Heart left ventricle (tissue), 16 donors: ENCODE measurements at regions of chr2 and their contacts with region 1.

Region 1: GRCh38 chr2:36711741-36712288 is 15.3 kb downstream of the VIT start:
- DNase-seq: no peak
- ATAC-seq: no peak
- H3K4me3 ChIP-seq: no peak overlapping the region
- H3K27ac ChIP-seq: no peak overlapping the region
- H3K4me1 ChIP-seq: peaks cover 0 to 12% (median under 1%) of the 10 kb centered on the region in 12 donors
- H3K27me3 ChIP-seq: no peaks in the 10 kb centered on the region
- CTCF ChIP-seq: no peak
- POLR2A ChIP-seq: no peak

Region 2: DNA sequence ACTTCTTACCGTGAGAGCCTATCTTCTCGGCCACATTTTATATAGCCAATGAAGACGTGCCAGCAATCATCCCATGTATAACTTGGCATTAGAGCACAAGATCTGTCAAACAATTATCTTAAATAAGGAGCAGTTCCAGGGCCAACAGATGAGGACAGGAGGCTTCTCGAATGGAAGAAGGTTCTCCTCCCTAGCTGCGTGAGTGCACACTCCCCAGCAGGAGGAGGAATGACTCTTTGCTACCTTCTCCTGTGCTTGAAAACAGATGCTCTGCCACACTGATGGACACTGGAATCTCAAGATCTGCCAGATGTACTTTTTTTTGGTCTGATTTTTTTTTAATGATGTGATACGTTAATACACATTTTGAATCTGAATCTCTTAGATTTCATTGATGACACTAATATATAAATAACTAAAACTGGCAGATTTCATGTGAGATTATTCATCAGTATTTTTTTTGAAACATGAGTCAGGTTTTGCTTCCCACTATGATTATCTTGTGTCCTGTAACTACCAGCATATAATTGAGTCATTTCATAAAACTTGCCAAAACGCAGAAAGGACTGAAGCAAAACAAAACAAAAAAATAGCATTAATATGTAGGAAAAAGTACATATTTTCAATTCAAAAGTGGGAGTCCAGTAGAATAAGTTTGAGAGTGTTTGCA is 15.9 kb before region 1 on chr2:
- intact Hi-C with region 1: no loop called
- DNase-seq: no peak
- ATAC-seq: peak; percentile 42 to 64 (median 47)
- H3K4me3 ChIP-seq: peak overlapping the region in 3 of 12 donors; percentile 38 to 55 (median 47)
- H3K27ac ChIP-seq: peak overlapping the region in 1 of 12 donors; percentile 39
- H3K4me1 ChIP-seq: peaks cover 0 to 3% (median 0%) of the 10 kb centered on the region in 12 donors
- H3K27me3 ChIP-seq: no peaks in the 10 kb centered on the region
- CTCF ChIP-seq: peak in 3 of 12 donors; percentile 15 to 36 (median 25)
- POLR2A ChIP-seq: no peak

Region 3: DNA sequence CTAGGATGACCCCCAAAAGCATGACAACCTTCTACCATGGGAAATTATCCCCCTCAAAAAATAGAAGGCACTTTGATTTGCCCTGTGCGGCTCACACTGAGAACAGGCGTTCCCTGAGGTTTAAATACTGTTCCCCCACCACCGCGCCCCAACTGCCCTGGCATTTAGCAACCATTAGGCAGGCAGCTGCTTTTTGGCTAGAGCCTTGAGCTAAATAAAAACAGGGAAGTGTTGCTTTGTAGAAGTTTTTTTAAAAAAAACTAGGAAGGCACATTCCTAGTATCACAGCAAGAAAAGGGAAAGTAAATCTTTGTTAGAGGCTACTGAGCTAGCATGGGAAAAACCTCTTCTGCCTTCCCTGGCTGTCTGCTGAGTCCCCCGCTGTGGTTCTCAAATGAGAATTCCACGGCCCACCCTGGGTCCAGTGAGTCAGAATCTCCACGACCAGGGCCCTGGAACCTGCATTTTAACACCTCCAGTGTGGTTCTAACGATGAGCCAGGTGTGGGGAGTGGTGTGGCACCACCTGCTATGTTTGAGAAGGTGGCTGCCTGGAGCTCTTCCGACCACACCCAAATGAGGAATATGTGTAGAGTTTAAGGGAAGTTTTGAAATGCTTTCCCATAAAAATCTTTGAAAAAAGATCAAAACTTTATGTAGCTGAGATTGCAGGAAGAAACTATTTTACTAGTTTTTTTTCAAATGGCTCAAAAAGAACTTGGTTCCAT is 51.1 kb after region 1 on chr2:
- intact Hi-C with region 1: loop called in 1 of 10 experiments (anchors 5 kb)
- DNase-seq: no peak
- ATAC-seq: no peak
- H3K4me3 ChIP-seq: no peak overlapping the region
- H3K27ac ChIP-seq: no peak overlapping the region
- H3K4me1 ChIP-seq: no peaks in the 10 kb centered on the region
- H3K27me3 ChIP-seq: peaks cover 0 to 5% (median 0%) of the 10 kb centered on the region in 9 donors
- CTCF ChIP-seq: no peak
- POLR2A ChIP-seq: no peak